ENCODE measurements at regions of chr19 and their contacts with region 1.

Region 1: GRCh38 chr19:14198384-14199376 is 7.3 kb downstream of the ADGRL1 start:
- DNase-seq: no peak
- ATAC-seq: no peak
- H3K4me3 Mint-ChIP-seq: no peak overlapping the region
- H3K27ac Mint-ChIP-seq: no peak overlapping the region
- H3K4me1 Mint-ChIP-seq: peaks cover 10% of the 10 kb centered on the region
- H3K27me3 Mint-ChIP-seq: peaks cover 5% of the 10 kb centered on the region
- CTCF ChIP-seq: no peak

Region 2: DNA sequence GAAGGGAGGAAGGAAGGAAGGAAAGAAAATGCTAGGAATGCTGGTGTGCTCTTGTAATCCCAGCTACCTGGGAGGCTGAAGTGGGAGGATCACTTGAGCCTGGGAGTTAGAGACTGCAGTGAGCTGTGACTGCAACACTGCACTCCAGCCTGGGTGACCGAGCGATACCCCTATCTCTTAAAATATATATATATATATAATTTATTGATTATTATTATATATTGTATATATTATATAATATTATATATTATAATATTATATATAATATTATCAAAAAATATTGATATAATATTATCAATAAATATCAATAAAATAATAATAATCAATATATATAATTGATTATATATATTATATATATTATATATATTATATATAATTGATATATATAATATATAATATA is 15.9 kb after region 1 on chr19:
- CTCF ChIA-PET with region 1: no interaction called
- POLR2A ChIA-PET with region 1: no interaction called
- intact Hi-C with region 1: no loop called
- DNase-seq: no peak
- ATAC-seq: no peak
- H3K4me3 Mint-ChIP-seq: no peak overlapping the region
- H3K27ac Mint-ChIP-seq: no peak overlapping the region
- H3K4me1 Mint-ChIP-seq: peaks cover 11% of the 10 kb centered on the region
- H3K27me3 Mint-ChIP-seq: peaks cover 11% of the 10 kb centered on the region
- CTCF ChIP-seq: no peak

Region 3: DNA sequence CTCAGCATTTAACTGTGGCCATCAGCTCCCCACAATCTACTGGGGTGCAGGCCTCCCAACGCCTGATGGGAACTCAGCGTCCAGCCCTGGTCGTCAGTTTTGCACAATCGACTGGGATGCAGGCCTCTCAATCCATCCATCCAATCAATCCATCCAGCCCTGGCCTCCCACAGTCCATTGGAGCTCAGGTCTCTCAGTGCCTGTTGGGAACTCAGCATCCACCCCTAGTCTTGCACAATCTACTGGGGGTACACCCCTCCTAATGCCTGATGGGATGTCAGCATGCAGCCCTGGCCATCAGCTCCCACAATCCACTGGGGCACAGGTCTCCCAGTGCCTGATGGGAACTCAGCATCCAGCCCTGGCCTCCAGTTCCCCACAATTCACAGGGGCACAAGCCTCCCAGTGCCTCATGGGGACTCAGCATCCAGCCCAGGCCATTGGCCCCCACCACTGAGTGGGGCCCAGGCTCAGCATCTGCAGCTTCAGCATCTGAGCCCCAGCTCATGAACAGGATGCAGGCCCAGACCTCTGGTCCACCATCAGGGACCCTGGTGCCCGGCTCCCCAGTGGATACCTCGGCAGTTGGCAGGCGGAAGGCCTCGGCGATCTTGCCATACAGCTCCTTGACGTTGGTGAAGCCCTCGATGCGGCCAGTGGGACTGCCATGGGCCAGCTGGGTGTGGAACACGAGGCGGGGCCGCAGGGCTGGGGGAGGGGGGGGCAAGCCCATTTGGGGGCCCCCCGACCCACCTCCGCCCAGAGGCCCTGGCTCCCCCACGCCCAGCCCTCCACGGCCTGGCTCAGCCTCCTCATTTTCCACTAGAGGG is 283.6 kb after region 1 on chr19:
- CTCF ChIA-PET with region 1: interaction called, 3 read pairs
- POLR2A ChIA-PET with region 1: interaction called, 3 read pairs
- intact Hi-C with region 1: loop called (anchors 1 kb)
- DNase-seq: no peak
- ATAC-seq: no peak
- H3K4me3 Mint-ChIP-seq: no peak overlapping the region
- H3K27ac Mint-ChIP-seq: no peak overlapping the region
- H3K4me1 Mint-ChIP-seq: peaks cover 2% of the 10 kb centered on the region
- H3K27me3 Mint-ChIP-seq: no peaks in the 10 kb centered on the region
- CTCF ChIP-seq: no peak